Heart right ventricle (tissue), 16 donors: ENCODE measurements at regions of chr3 and their contacts with region 1.

Region 1: GRCh38 chr3:64267721-64268604 is 42.7 kb upstream of the PRICKLE2 start:
- DNase-seq: peak; percentile 57 to 76
- ATAC-seq: peak; percentile 88 to 94 (median 91)
- H3K4me3 ChIP-seq: peak overlapping the region; percentile 61 to 88 (median 78)
- H3K27ac ChIP-seq: peak overlapping the region; percentile 55 to 93 (median 88)
- H3K4me1 ChIP-seq: peaks cover 5 to 51% (median 31%) of the 10 kb centered on the region in 9 donors
- H3K27me3 ChIP-seq: peaks cover 0 to 7% (median 0%) of the 10 kb centered on the region in 7 donors
- CTCF ChIP-seq: peak in 2 of 9 donors; percentile 15 to 22

Region 2: DNA sequence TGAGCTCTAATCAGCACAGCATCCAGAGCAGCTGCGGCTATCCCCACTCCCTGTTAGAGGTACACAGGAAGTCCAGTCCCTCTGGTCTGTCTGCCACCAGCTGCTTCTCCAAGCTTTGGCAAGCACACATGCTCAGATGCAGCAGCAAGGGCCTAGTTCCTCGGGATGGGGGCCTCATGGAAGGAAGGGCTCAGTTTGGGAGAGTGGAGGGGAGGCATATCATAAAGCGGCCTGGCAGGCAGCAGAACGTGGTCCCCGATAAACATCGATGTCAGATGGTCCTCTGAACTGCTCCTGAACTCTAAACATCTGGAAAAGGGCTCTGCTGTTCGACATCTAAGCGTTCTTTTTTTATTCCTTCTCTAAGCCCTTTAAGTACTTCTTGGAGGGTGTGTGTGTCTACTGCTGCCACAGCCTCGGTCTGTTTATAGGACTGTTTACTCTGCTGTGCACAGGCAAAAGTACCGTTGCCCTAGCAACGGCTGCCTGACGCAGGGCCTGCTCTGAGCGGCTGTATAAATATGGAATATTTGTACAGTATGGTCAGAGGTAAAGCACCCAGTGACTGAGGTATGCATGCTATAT is 117.2 kb before region 1 on chr3:
- intact Hi-C with region 1: loop called in 1 of 10 experiments (anchors 5 kb)
- DNase-seq: peak; percentile 65 to 67
- ATAC-seq: peak; percentile 91 to 97 (median 96)
- H3K4me3 ChIP-seq: no peak overlapping the region
- H3K27ac ChIP-seq: peak overlapping the region; percentile 41 to 82 (median 68)
- H3K4me1 ChIP-seq: peaks cover 13 to 44% (median 30%) of the 10 kb centered on the region in 9 donors
- H3K27me3 ChIP-seq: no peaks in the 10 kb centered on the region
- CTCF ChIP-seq: no peak

Region 3: GRCh38 chr3:64213962-64214379 is 54.0 kb before region 1 on chr3:
- intact Hi-C with region 1: loop called in 1 of 10 experiments (anchors 5 kb)
- DNase-seq: peak; percentile 83
- ATAC-seq: peak; percentile 53 to 77 (median 70)
- H3K4me3 ChIP-seq: peak overlapping the region in 9 of 10 donors; percentile 9 to 42 (median 27)
- H3K27ac ChIP-seq: peak overlapping the region; percentile 26 to 87 (median 76)
- H3K4me1 ChIP-seq: peaks cover 16 to 90% (median 62%) of the 10 kb centered on the region in 9 donors
- H3K27me3 ChIP-seq: no peaks in the 10 kb centered on the region
- CTCF ChIP-seq: no peak

Region 4: DNA sequence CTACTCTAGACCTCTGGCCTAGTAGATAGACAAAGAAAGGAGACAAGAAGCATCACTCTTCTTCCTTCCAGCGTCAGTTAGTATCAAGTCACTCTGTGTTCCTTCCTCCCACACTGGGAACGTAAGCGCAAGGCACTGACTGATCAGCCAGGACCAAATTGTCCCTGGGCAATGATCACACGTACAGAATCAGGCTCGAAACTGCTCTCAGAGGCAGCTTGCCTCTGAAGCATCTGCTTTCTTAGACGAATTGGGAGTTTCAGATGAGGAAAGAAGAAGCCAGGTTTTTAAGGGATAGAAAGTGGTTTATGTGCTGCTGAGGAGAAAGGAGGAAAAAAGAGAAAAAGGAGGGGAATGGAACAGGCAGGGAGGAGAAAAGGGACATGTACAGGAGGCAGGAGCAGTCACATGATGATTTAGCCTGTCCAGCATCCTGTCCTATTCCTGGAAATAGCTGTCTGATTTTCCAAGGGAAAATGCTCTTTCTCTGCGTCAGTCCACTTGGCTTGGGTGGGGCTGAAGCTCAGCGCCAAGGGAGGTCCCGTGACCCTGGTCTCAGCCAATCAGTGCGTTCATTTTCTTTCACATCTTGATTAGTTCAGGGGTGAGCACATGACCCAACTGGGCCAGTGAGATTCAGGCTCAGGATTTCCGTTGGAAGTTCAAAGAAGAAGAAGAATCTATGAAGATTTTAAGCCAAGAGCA is 59.3 kb after region 1 on chr3:
- intact Hi-C with region 1: loop called in 2 of 10 experiments (anchors 2 to 5 kb)
- DNase-seq: peak; percentile 62 to 87
- ATAC-seq: peak; percentile 89 to 98 (median 96)
- H3K4me3 ChIP-seq: peak overlapping the region in 3 of 10 donors; percentile 0 to 9 (median 3)
- H3K27ac ChIP-seq: peak overlapping the region; percentile 56 to 90 (median 84)
- H3K4me1 ChIP-seq: peaks cover 0 to 10% (median 6%) of the 10 kb centered on the region in 9 donors
- H3K27me3 ChIP-seq: no peaks in the 10 kb centered on the region
- CTCF ChIP-seq: no peak